ENCODE measurements at regions of chr11 and their contacts with region 1.

Region 1: GRCh38 chr11:12989428-12990161 is 19.5 kb upstream of the RASSF10 start:
- DNase-seq: no peak

Region 2: DNA sequence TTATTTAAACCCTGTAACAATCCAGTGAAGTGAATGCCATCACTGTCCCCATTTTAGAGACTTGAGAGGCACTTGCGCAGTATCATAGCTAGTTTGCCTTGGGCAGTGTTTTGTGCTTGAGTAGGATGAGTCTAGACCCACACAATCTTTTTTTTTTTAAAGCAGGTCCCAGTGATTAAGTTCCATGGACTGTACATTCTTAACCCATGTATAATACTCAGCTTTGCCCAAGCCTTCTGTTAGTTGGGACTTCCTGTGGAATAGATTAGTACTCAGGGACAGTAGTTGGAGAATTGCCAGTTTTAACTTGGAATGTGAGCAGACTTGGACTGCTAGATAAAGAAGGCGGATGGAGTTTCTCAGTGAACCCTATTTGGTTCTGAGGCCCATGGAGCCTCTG is 89.1 kb before region 1 on chr11:
- in situ Hi-C with region 1: no loop called
- DNase-seq: no peak

Region 3: DNA sequence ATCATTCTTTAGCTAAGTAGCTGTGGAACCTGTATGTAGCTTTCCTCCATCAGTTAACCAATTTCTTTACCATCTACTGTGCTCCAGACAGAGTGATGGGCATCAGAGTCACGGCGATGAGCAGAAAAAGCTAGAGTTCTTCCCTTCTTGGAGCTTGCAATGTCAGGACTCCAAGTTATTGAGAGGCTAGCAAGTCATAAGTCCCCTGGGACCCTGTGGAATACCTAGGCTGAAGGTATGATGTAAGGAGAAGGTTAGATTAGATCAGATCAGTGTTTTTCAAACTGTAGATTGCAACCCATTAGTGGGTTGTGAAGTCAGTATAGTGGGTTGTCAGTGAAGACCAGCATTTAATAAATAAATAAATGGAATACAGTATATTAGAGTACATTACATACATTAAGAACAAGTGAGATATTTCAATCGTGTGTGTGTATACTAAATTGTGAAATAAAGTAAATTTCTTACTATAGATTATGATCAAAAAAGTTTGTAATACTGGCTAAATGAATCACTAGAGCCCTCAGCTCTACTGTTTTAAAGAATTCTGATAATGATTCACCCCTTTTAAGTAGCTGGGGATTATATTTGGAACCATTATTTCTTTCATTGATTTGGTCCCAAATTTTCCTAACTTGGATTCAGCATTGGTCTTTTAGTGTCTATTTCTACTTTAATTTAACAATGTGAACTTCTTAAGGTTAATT is 71.8 kb after region 1 on chr11:
- in situ Hi-C with region 1: no loop called
- DNase-seq: peak; percentile 70

Region 4: DNA sequence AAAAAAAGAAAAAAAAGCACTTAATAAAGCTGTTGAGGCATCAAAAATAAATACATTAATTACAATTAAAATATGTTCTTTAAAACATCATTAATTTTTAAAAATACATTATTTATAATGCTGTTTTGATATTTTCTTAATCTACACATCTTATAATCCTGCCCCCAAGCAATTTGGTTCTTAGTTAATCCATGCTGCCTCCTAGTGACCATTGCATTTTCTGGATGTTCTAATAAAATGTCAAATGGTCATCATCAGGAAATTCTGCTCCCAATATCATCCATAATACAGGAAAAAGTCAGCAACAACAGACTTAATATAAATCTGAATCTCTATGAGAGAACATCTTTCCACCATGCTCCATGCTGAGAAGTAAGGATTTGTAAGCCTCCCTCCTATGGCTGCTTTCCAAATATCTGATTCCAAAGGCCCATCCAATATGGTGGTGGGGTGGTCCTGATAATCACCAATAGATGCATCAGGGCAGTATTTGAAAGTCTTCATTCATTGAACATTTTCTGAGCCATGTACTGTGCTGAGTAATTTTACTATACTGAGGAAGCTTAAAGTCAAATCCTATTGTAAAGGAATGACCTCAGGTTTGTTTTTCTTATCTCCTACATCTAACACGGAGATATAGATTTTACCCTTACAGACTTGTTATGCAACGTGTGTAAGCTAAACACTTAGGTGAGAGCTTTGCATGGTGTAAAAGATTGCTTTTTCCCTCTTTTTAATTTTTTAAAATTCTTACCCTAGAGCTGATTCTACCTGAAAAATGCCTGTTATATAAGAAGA is 163.3 kb after region 1 on chr11:
- in situ Hi-C with region 1: loop called (anchors 25 kb)
- DNase-seq: peak; percentile 64

Measured in SK-MEL-5 (cell line).